ENCODE measurements at regions of chr11 and their contacts with region 1.

Region 1: GRCh38 chr11:44911029-44911814 is 39.5 kb downstream of the TP53I11 start:
- DNase-seq: peak; percentile 59
- H3K4me3 ChIP-seq: no peak overlapping the region
- H3K27ac ChIP-seq: no peak overlapping the region
- H3K27me3 ChIP-seq: peaks cover 13% of the 10 kb centered on the region
- CTCF ChIP-seq: peak; percentile 75

Region 2: GRCh38 chr11:44556735-44557409 is 354.4 kb before region 1 on chr11:
- CTCF ChIA-PET with region 1: interaction called, 34 read pairs
- POLR2A ChIA-PET with region 1: no interaction called
- DNase-seq: no peak
- H3K4me3 ChIP-seq: no peak overlapping the region
- H3K27ac ChIP-seq: no peak overlapping the region
- H3K27me3 ChIP-seq: peaks cover 3% of the 10 kb centered on the region
- CTCF ChIP-seq: peak; percentile 86

Region 3: DNA sequence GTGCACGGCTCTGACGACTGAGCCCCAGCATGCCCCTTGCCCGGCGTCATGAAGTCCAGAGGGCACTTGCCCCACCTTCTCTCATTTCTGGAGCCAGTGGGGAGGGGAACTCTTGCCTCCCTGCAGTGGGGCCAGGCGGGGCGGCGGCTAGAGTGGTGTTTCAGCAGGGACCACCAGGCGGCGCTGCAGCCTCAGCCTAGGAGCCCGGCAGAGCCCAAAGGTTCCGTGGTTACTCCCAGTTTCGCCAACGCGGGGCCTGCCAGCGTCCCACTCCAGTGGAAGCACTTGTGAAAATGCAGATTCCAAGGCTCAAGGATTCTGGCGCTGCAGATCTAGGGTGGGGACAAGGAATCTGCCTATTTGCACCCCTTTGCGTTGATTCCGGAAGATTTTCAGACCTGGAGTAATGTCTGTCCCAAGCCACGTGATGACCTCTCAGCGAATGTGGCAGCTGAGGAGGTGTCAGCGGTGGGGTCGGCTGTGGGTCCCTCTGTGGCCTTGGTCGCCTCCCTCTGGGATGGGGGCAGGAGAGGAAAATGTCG is 290.0 kb before region 1 on chr11:
- CTCF ChIA-PET with region 1: interaction called, 230 read pairs
- POLR2A ChIA-PET with region 1: no interaction called
- DNase-seq: no peak
- H3K4me3 ChIP-seq: no peak overlapping the region
- H3K27ac ChIP-seq: no peak overlapping the region
- H3K27me3 ChIP-seq: no peaks in the 10 kb centered on the region
- CTCF ChIP-seq: peak; percentile 98

Region 4: DNA sequence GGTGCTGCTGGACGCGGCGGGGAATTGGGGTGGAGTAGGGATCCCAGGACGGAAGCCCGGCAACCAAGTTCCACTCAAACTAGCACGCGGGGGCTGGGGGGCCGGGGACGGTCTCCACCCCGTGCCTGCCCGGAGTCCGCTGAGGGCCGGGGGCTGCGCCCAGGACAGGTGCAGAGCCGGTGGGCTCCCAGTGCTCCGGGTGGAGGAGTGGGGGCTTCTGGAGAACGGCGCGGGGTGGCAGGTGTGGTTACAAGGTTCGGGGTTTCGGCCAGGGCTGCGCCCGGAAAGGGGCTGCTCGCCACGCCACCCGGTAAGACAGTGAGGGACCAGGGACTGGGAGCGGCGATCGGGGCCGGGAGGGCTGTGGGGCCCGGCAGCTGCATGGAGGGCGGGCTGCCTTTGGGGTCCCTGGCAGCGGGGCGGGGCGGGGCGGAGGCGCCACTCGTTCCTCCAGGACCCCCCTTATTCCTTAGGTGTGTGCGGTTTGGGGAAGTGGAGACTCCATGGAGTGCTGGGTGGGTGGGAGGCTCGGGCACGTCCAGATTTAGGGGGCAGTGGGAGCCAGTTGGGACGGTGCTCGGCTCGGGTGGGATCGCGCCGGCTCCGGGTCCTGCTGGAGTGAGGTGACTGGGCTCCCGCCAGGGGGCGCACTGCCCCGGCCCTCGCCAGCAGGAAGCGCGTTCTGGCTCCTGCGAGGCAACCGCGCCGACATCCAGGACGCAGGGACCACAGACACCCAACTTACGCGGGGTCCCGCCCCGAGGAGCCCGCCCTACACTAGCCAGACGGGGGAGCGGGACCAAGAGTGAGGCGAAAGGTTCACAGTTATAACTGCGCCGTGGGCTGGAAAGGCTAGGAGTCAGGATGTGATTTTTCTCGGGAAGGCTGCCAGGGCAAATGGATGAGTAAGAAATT is 183.6 kb before region 1 on chr11:
- CTCF ChIA-PET with region 1: interaction called, 16 read pairs
- POLR2A ChIA-PET with region 1: no interaction called
- DNase-seq: peak; percentile 26
- H3K4me3 ChIP-seq: peak overlapping the region; percentile 56
- H3K27ac ChIP-seq: no peak overlapping the region
- H3K27me3 ChIP-seq: peaks cover 56% of the 10 kb centered on the region
- CTCF ChIP-seq: peak; percentile 88

Region 5: DNA sequence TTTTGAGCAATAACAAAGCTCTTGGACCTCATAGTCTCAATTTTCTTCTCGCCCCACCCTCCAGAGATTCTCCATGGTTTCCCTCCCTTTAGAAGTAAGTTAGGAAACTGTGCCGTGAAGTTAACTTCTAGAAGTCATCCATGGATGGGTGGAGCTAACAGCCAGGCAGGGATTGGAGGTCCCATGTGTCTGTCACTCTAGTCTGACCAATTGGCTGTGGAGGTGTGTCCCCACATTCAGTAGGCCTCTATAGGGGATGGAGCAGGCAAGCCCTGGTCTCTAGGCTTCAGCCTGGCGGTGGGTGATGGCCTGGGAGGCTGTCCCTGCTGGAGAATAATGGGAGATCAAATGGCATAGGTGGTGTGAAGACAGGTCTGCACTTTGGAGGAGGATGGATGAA is 11.3 kb before region 1 on chr11:
- CTCF ChIA-PET with region 1: interaction called, 41 read pairs
- POLR2A ChIA-PET with region 1: no interaction called
- DNase-seq: peak; percentile 33
- H3K4me3 ChIP-seq: no peak overlapping the region
- H3K27ac ChIP-seq: no peak overlapping the region
- H3K27me3 ChIP-seq: peaks cover 26% of the 10 kb centered on the region
- CTCF ChIP-seq: no peak

Region 6: GRCh38 chr11:45102810-45103621 is 191.8 kb after region 1 on chr11:
- CTCF ChIA-PET with region 1: interaction called, 10 read pairs
- POLR2A ChIA-PET with region 1: no interaction called
- DNase-seq: no peak
- H3K4me3 ChIP-seq: peak overlapping the region; percentile 21; the same call in 1 of the 2 replicates
- H3K27ac ChIP-seq: peak overlapping the region; percentile 11
- H3K27me3 ChIP-seq: peaks cover 30% of the 10 kb centered on the region
- CTCF ChIP-seq: peak; percentile 97

Region 7: DNA sequence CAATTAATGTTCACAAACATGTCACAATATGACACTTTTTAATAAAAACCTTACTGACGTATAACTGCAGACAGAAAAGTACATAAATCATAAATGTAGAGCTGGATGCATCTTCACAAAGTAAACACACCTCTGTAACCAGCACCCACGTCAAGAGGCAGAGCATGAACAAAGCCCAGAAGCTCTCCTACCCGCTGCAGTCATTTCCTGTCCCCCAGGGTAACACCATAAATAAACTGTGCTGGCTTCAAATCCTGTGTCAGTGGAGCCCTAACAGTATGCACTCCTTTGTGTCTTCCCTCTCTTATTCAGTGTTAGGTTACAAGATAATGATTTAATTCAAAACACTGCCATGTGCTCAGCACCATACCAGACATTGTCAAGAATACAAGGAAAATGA is 369.2 kb after region 1 on chr11:
- CTCF ChIA-PET with region 1: no interaction called
- POLR2A ChIA-PET with region 1: no interaction called
- DNase-seq: no peak
- H3K4me3 ChIP-seq: no peak overlapping the region
- H3K27ac ChIP-seq: no peak overlapping the region
- H3K27me3 ChIP-seq: peaks cover 32% of the 10 kb centered on the region
- CTCF ChIP-seq: no peak

Measured in AG04450 (cell line).